Posterior vena cava (tissue), 2 donors: ENCODE measurements at regions of chr4 and their contacts with region 1.

Region 1: GRCh38 chr4:125334926-125335325 is 20.2 kb downstream of the FAT4 start:
- DNase-seq: no peak

Region 2: GRCh38 chr4:125062115-125063050 is 272.5 kb before region 1 on chr4:
- intact Hi-C with region 1: loop called in 1 of 2 experiments (anchors 5 kb)
- DNase-seq: no peak

Region 3: GRCh38 chr4:126071346-126072333 is 736.7 kb after region 1 on chr4:
- intact Hi-C with region 1: no loop called
- DNase-seq: no peak